Calu3 (cell line): ENCODE measurements at regions of chr9 and their contacts with region 1.

Region 1: DNA sequence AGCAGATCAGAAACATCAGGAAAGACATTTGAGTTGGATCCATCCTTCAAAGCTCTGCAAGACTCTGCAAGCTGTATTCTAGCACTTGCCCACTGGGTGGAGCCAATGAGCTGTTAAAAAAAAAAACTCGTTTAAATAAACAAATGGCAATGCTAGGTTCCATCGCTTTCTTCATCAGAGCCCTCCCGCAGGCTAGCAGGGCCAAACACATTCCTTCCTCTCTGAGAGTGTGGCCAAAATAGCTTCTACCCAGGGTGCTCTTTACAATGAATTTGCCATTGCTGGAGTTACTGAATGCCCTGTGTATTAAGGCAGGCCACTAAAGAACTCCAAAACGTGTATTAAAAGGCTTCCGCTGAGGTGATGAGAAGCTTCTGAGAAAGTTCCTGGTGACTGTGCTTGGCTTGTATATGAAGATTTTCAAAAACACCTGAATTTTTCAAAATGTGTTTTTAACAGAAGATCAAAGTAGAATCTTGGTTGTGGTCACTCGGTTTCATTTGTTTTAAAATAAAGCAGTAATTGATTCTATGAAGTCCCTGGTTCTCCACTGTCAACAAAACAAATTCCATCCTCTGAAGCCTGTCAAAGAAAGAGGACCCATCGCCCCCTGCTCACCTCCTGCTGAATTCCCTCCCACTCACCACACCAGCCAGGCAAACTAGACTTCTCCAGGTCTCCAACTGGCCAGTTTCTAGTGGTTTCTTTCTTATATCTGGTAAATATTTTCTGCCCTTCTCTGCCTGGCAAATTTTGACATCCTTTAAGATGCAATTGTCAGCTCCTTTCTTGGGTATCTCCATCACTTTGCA is 36.5 kb upstream of the EQTN start:
- DNase-seq: peak; percentile 47
- H3K4me3 Mint-ChIP-seq: no peak overlapping the region
- H3K27ac Mint-ChIP-seq: no peak overlapping the region
- H3K4me1 Mint-ChIP-seq: peaks cover 22% of the 10 kb centered on the region
- H3K27me3 Mint-ChIP-seq: no peaks in the 10 kb centered on the region
- CTCF ChIP-seq: peak; percentile 36

Region 2: GRCh38 chr9:27108981-27109541 is 224.4 kb before region 1 on chr9 and contains the start of gene TEK:
- CTCF ChIA-PET with region 1: no interaction called
- intact Hi-C with region 1: no loop called
- DNase-seq: no peak
- H3K4me3 Mint-ChIP-seq: no peak within 1 kb of the TSS
- H3K27ac Mint-ChIP-seq: no peak within 1 kb of the TSS
- H3K4me1 Mint-ChIP-seq: peaks cover 8% of the 10 kb centered on the region
- H3K27me3 Mint-ChIP-seq: no peaks in the 10 kb centered on the region
- CTCF ChIP-seq: no peak
- total RNA-seq, gene TEK: not detected in 2 replicates

Region 3: DNA sequence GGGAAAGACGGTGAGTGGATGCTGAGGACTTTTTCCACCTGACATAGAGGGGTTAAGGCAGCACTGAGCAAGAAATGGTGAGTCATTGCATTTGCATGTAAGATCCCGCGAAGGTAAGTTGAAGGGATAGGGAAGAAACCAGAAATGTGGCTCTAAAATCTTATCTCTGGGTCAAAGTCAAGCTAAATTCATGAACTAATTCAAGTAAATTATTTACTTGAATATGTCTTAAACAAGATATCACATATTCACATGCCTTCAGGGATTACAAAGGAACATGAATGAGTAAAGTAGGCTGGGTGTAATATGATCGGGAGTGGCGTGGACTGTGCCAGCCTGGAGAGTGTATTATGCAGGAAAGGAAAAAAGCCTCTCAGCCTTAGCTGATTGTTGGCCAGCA is 37.9 kb after region 1 on chr9:
- CTCF ChIA-PET with region 1: no interaction called
- intact Hi-C with region 1: loop called (anchors 5 kb)
- DNase-seq: peak; percentile 48
- H3K4me3 Mint-ChIP-seq: peak overlapping the region; percentile 4
- H3K27ac Mint-ChIP-seq: peak overlapping the region; percentile 75
- H3K4me1 Mint-ChIP-seq: peaks cover 62% of the 10 kb centered on the region
- H3K27me3 Mint-ChIP-seq: no peaks in the 10 kb centered on the region
- CTCF ChIP-seq: no peak

Region 4: GRCh38 chr9:27529316-27530278 is 196.2 kb after region 1 on chr9 and contains the start of gene MOB3B:
- CTCF ChIA-PET with region 1: interaction called, 12 read pairs
- intact Hi-C with region 1: loop called (anchors 1 kb)
- DNase-seq: peak; percentile 83
- H3K4me3 Mint-ChIP-seq: peak within 1 kb of the TSS; percentile 81
- H3K27ac Mint-ChIP-seq: peak within 1 kb of the TSS; percentile 14
- H3K4me1 Mint-ChIP-seq: peaks cover 3% of the 10 kb centered on the region
- H3K27me3 Mint-ChIP-seq: no peaks in the 10 kb centered on the region
- CTCF ChIP-seq: peak; percentile 67
- total RNA-seq, gene MOB3B: 7.6 and 10.8 TPM in 2 replicates

Region 5: DNA sequence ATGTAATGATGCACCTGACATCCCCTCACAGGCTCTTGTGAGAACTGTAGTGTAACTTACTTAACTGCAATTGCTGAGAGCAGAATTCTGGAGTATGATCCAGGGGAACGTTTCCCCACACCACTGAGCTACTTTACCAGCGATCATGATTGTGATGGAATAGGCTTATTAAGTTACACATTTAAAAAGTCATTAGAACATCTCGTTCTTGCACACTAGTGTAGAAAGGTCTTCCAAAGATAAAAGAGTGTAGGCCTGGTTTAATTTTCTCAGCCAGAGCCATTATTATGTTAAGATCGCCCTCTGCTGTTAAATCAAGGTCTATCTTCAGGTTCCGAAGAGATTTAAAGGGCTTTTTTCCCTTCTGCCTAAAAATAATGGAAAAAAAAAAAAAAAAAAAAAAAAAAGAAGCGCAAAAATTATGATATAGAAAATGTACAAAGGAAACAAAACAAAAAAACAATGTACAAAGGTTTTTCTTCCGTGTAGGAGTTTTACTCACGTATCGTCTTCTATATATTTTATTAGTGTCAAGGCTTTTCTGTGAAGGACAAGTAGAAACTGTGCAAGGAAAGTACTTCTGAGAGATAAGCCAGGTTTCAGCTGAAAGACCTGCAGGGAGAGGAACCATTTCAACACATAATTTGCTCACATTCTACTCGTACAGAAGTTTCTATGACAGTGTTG is 214.8 kb after region 1 on chr9:
- CTCF ChIA-PET with region 1: interaction called, 4 read pairs
- intact Hi-C with region 1: loop called (anchors 1 kb)
- DNase-seq: no peak
- H3K4me3 Mint-ChIP-seq: no peak overlapping the region
- H3K27ac Mint-ChIP-seq: no peak overlapping the region
- H3K4me1 Mint-ChIP-seq: no peaks in the 10 kb centered on the region
- H3K27me3 Mint-ChIP-seq: no peaks in the 10 kb centered on the region
- CTCF ChIP-seq: no peak

Region 6: DNA sequence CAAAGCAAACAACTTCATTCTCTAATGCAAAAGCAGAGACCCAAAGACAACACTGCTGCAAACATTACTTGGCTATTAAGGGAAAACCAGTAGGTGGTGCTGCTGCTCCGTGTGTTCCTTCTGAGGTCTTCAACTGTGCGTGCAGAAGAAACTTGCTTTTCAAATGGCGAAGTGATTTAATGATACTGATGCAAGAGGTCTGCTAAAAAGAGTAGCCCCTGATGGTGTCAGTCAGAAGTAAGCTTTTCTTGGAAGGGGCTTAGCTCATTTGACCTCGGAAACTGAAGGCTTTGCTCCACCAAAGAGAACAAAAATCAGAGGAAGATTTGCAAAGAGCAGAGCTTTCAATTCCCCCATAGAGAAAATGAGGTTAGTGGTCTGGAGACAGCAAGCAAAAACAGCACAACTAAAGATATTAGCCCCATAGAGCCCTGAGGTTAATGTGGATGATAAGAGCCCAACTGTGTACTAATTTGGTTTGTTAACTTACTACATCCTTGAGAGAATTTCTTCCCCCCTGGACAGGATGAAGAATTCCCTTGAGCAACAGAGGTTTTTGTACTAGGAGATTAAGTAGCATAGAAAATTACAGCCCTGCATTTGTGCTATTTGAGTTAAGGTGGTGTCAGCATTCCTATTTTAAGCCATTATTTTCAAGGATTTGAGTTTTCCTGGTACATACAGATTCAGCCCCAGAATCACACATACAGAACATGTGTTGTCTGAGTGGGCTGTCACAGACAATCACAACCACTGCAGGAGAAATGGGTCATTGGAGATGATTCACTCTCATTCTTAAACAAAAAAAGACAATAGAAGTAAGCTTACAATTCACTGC is 393.0 kb after region 1 on chr9:
- CTCF ChIA-PET with region 1: no interaction called
- intact Hi-C with region 1: loop called (anchors 1 kb)
- DNase-seq: peak; percentile 54
- H3K4me3 Mint-ChIP-seq: no peak overlapping the region
- H3K27ac Mint-ChIP-seq: no peak overlapping the region
- H3K4me1 Mint-ChIP-seq: no peaks in the 10 kb centered on the region
- H3K27me3 Mint-ChIP-seq: peaks cover 11% of the 10 kb centered on the region
- CTCF ChIP-seq: peak; percentile 60